ENCODE measurements at regions of chr22 and their contacts with region 1.

Region 1: GRCh38 chr22:40346178-40347118 is at the start of gene ADSL:
- DNase-seq: peak; percentile 90 to 93 (median 93)
- ATAC-seq: peak; percentile 95 to 98 (median 98)
- H3K4me3 ChIP-seq: peak within 1 kb of the TSS; percentile 49 to 85 (median 76)
- H3K27ac ChIP-seq: peak within 1 kb of the TSS; percentile 23 to 92 (median 90)
- H3K4me1 ChIP-seq: peaks cover 0 to 33% (median 16%) of the 10 kb centered on the region in 12 donors
- H3K27me3 ChIP-seq: no peaks in the 10 kb centered on the region
- CTCF ChIP-seq: peak in 3 of 12 donors; percentile 11 to 30 (median 26)
- POLR2A ChIP-seq: peak in 1 of 2 donors; percentile 85
- total RNA-seq, gene ADSL: 46.9 to 87.8 (median 52.0) TPM

Region 2: GRCh38 chr22:40050258-40050657 is 296.2 kb before region 1 on chr22:
- intact Hi-C with region 1: loop called in 7 of 10 experiments (anchors 2 to 10 kb)
- DNase-seq: no peak
- ATAC-seq: no peak
- H3K4me3 ChIP-seq: no peak overlapping the region
- H3K27ac ChIP-seq: no peak overlapping the region
- H3K4me1 ChIP-seq: peaks cover 3 to 44% (median 23%) of the 10 kb centered on the region in 12 donors
- H3K27me3 ChIP-seq: no peaks in the 10 kb centered on the region
- CTCF ChIP-seq: no peak
- POLR2A ChIP-seq: no peak

Region 3: DNA sequence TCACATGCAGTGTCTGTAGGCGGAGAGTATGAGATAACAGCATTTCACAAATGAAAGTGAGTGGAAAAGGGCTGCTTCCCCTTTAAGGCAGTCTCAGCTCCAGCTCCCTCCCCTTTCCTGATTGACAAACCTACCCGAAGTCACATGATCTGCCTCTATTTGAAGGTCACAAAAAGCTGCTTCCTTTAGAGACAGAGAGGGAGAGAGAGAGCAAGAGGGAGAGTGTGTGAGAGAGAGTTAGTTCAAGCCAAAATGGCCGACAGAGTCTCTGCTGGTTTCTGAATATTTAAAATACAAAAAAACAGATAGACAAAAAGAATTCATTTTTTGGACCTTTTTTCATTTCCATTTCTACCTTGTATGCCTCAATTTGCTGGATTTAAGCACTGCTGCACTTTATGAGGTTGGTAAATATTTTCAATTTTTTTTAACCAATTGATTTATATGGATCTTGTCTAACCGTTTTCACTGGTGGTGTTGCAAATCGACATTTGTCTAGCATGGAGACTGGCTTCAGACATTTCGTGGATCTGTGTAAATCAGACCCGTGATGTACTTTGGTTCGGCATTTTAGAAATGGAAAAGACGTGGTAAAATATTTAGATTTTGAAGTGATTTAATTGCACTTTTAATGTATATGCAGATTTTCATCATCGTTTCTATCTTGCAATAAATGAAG is 168.6 kb before region 1 on chr22 and contains the start of gene TNRC6B:
- intact Hi-C with region 1: loop called in 2 of 10 experiments (anchors 5 to 10 kb)
- DNase-seq: peak in 4 of 5 donors; percentile 69 to 89 (median 82)
- ATAC-seq: peak; percentile 97 to 98 (median 98)
- H3K4me3 ChIP-seq: peak within 1 kb of the TSS; percentile 57 to 88 (median 70)
- H3K27ac ChIP-seq: peak within 1 kb of the TSS; percentile 67 to 96 (median 82)
- H3K4me1 ChIP-seq: peaks cover 11 to 66% (median 56%) of the 10 kb centered on the region in 12 donors
- H3K27me3 ChIP-seq: no peaks in the 10 kb centered on the region
- CTCF ChIP-seq: no peak
- POLR2A ChIP-seq: peak; percentile 85 to 95
- total RNA-seq, gene TNRC6B: 32.7 to 62.4 (median 41.1) TPM

Region 4: DNA sequence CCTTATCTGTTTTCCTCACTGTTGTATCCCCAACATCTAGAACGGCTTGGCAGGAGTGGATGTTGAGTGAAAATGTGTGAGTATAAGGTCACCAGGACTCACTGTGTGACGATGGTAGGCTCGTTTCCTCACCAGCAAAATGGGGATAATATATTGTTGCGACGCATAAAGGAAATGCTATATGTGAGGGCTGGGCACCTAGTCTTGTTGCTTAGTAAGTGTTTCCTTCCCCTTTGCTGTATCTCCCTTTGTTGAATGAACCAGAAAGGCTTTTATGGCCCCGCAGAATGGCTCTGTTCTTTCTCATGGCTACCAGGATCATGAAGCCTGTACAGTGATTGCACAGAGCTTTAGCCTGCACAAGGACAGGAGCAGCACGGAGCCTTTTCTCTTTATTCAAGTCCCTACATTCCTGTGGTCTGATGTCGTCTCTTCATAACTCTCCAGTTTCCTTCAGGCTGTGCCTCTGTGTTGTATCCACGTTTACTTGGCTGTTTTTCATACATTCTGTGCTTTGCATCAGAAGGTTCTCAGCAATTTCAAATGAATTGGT is 163.3 kb before region 1 on chr22:
- intact Hi-C with region 1: loop called in 2 of 10 experiments (anchors 5 to 10 kb)
- DNase-seq: no peak
- ATAC-seq: peak; percentile 6 to 48 (median 38)
- H3K4me3 ChIP-seq: peak overlapping the region in 4 of 12 donors; percentile 2 to 17 (median 13)
- H3K27ac ChIP-seq: peak overlapping the region in 11 of 12 donors; percentile 3 to 68 (median 56)
- H3K4me1 ChIP-seq: peaks cover 6 to 90% (median 68%) of the 10 kb centered on the region in 12 donors
- H3K27me3 ChIP-seq: no peaks in the 10 kb centered on the region
- CTCF ChIP-seq: no peak
- POLR2A ChIP-seq: no peak

Region 5: DNA sequence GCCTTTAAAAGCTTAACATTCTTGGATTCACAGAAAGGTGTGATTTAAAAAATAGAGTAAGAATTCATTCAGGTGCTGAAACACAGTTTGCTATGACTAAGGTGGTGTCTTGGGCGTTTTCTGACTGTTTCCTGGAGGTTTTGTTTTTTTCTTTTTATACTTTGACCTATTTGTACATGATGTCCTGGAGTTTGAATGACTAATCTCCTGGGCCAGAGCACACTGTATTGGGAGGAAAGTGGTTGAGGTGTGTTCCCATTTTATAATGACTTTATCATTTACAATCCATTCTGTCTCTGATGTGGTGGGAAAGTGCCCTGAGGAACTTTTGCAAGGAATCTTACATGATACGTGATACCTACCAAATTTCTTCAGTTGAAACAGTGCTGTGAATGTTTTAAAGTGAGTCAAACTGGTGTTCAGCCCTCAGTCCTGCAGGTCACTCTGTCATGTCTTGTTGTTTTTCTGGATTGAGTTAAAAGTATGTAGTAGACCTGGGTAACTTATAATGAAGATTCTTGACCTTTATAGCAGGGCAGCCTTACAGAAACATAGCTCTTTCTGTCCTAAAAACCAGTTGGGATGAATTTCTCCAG is 87.9 kb before region 1 on chr22:
- intact Hi-C with region 1: no loop called
- DNase-seq: no peak
- ATAC-seq: peak; percentile 53 to 75 (median 70)
- H3K4me3 ChIP-seq: no peak overlapping the region
- H3K27ac ChIP-seq: peak overlapping the region in 6 of 12 donors; percentile 3 to 82 (median 64)
- H3K4me1 ChIP-seq: peaks cover 0 to 48% (median 19%) of the 10 kb centered on the region in 12 donors
- H3K27me3 ChIP-seq: no peaks in the 10 kb centered on the region
- CTCF ChIP-seq: no peak
- POLR2A ChIP-seq: no peak

Measured in heart left ventricle (tissue), 16 donors.